Activated CD4-positive, alpha-beta T cell treated with anti-CD3 and anti-CD28 coated beads for 36 hours (primary cell): ENCODE measurements at regions of chr19 and their contacts with region 1.

Region 1: GRCh38 chr19:18450931-18451845 is 13.3 kb upstream of the ISYNA1 start:
- DNase-seq: peak; percentile 94
- ATAC-seq: peak; percentile 95
- H3K4me3 Mint-ChIP-seq: no peak overlapping the region
- H3K27ac Mint-ChIP-seq: peak overlapping the region; percentile 51
- H3K4me1 Mint-ChIP-seq: no peaks in the 10 kb centered on the region
- H3K27me3 Mint-ChIP-seq: no peaks in the 10 kb centered on the region

Region 2: GRCh38 chr19:18461451-18461850 is 10.3 kb after region 1 on chr19:
- CTCF ChIA-PET with region 1: interaction called, 18 read pairs
- POLR2A ChIA-PET with region 1: no interaction called
- intact Hi-C with region 1: no loop called
- DNase-seq: no peak
- ATAC-seq: no peak
- H3K4me3 Mint-ChIP-seq: no peak overlapping the region
- H3K27ac Mint-ChIP-seq: no peak overlapping the region
- H3K4me1 Mint-ChIP-seq: peaks cover 2% of the 10 kb centered on the region
- H3K27me3 Mint-ChIP-seq: no peaks in the 10 kb centered on the region